ENCODE measurements at regions of chr16 and their contacts with region 1.

Region 1: DNA sequence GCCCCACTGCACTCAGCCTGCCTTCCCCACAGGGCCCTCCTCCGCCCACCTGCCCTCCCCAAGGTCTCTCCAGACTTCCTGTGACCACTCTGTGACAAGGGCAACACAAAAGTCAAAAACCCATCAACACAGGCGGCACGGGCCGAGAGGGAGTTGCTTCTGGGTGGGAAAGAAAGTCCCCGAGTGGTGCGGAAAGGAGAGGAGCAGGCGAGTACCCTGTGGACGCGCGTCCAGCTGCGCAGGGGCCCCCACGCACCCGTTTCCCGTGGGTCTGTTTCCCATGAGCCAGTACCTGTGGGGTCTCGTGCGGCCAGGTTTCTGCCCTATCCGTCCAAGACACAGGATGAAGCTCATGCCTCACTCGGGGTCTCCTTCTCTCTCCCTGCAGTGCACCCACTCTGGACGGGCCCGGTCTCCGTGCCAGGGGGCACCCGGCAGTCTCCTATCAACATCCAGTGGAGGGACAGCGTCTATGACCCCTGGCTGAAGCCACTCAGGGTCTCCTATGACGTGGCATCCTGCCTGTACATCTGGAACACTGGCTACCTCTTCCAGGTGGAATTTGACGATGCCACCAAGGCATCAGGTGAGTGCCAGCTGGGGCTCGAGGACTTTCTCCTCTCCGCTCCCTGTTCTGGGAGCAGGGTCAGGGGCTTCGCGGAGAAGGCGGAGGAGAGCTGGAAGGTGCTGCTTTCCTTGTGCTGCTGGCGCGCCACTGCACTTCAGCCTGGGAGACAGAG is 12.2 kb downstream of the CD2BP2 start:
- DNase-seq: peak; percentile 58
- H3K4me3 ChIP-seq: peak overlapping the region; percentile 82
- H3K27ac ChIP-seq: peak overlapping the region; percentile 92
- H3K4me1 ChIP-seq: peaks cover 46% of the 10 kb centered on the region
- CTCF ChIP-seq: no peak

Region 2: GRCh38 chr16:30407102-30407803 is 64.3 kb after region 1 on chr16 and contains the start of gene ZNF771:
- CTCF ChIA-PET with region 1: no interaction called
- POLR2A ChIA-PET with region 1: interaction called, 7 read pairs
- intact Hi-C with region 1: loop called (anchors 1 kb)
- DNase-seq: peak; percentile 93
- H3K4me3 ChIP-seq: peak within 1 kb of the TSS; percentile 84
- H3K27ac ChIP-seq: peak within 1 kb of the TSS; percentile 82
- H3K4me1 ChIP-seq: peaks cover 28% of the 10 kb centered on the region
- CTCF ChIP-seq: peak; percentile 49
- total RNA-seq, gene ZNF771: 6.4 and 11.3 TPM in 2 replicates

Region 3: GRCh38 chr16:30775392-30776188 is 432.7 kb after region 1 on chr16:
- CTCF ChIA-PET with region 1: no interaction called
- POLR2A ChIA-PET with region 1: no interaction called
- intact Hi-C with region 1: no loop called
- DNase-seq: no peak
- H3K4me3 ChIP-seq: no peak overlapping the region
- H3K27ac ChIP-seq: no peak overlapping the region
- H3K4me1 ChIP-seq: no peaks in the 10 kb centered on the region
- CTCF ChIP-seq: no peak

Measured in OCI-LY7 (cell line).